ENCODE measurements at regions of chr16 and their contacts with region 1.

Region 1: DNA sequence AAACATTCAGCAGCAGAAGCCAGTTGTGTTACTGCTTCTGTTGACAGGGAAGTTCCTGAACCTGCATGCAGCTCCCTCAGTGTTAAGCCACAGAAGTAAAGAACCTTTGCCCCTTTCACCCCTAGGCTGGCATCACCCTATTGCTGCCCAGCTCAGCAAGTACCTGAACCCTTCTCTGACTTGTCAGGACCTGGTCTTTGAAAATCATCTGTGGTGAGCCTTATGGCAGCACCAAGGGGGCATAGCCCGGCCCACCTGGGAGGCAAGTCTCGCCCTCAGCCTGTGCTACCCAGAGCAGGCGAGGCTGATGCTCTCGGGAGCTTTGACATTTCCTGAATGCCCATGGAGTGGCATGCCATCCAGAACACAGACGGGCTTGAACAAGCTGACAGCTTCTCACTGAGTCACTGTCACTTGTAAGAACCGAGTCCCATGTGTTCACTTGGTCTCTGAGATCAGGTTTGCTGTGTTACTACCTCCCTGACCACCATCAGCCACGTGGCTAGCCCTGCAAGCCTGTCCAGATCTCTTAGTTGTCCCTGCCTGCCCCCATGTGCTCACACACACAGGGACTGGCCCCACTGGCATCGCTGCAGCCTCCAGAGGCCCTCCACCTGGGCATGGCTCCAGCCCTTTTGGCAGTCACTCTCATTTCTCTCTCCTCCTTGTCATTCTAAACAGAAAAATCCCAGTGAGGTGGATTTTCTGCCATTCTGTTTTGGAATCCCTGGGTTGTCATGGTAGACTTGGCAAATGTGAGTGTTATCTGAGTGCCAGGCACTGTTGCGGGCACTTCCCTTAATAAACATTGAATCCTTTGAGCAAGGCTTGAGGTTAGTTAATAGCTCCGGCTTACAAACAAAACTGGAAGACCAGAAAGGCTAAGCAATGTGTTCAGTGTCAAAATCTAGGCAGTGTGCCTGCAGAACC is 2.9 kb upstream of the CARMIL2 start:
- DNase-seq: peak in 4 of 5 donors; percentile 76 to 90 (median 81)
- ATAC-seq: peak; percentile 88 to 97 (median 94)
- H3K4me3 ChIP-seq: no peak overlapping the region
- H3K27ac ChIP-seq: peak overlapping the region in 7 of 12 donors; percentile 16 to 54 (median 45)
- H3K4me1 ChIP-seq: peaks cover 0 to 30% (median 12%) of the 10 kb centered on the region in 12 donors
- H3K27me3 ChIP-seq: peaks cover 0 to 29% (median 18%) of the 10 kb centered on the region in 9 donors
- CTCF ChIP-seq: no peak
- POLR2A ChIP-seq: no peak

Region 2: DNA sequence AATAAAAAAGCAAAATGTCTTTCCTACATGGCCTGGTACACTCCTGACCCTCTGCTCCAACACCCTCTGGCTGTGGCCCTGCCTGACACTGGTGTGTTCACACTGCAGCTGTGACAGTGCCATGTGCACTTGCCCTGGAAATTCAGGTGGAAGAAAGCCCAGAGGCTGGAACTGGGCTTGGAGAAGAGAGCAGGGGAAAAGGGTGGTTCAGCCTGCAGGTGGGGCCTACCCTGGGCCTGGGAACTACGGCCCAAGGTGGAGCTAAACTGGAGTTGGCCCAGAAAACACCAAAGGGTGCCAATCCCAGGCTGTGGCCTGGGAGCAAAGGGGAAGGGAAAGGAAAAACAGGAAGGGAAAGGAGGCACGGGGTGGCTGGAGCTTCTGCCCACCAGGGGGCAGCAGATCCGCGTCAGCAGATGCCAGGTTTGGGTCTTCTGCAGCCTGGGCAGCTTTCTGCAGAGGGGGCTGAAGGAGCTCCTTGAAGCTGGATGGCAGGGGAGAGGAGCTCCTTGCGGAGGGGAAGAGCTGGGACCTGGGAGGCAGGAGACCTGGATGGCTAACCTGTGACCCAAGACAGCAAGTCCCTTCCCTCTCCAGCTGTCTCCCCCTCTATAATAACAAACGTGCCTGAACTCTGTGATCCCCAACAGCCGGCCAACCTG is 95.2 kb before region 1 on chr16:
- intact Hi-C with region 1: loop called in 1 of 10 experiments (anchors 10 kb)
- DNase-seq: peak; percentile 67 to 84 (median 75)
- ATAC-seq: peak; percentile 16 to 62 (median 45)
- H3K4me3 ChIP-seq: no peak overlapping the region
- H3K27ac ChIP-seq: peak overlapping the region in 10 of 12 donors; percentile 8 to 71 (median 54)
- H3K4me1 ChIP-seq: peaks cover under 1 to 73% (median 45%) of the 10 kb centered on the region in 12 donors
- H3K27me3 ChIP-seq: no peaks in the 10 kb centered on the region
- CTCF ChIP-seq: peak; percentile 86 to 98 (median 92)
- POLR2A ChIP-seq: no peak